ENCODE measurements at regions of chr20 and their contacts with region 1.

Region 1: GRCh38 chr20:49909499-49910339 is 5.6 kb downstream of the SPATA2 start:
- DNase-seq: peak in 1 of 2 donors; percentile 58
- H3K4me3 ChIP-seq: no peak overlapping the region
- H3K27ac ChIP-seq: peak overlapping the region; percentile 33 to 34
- H3K4me1 ChIP-seq: peaks cover 3 to 12% of the 10 kb centered on the region in 2 donors
- H3K27me3 ChIP-seq: no peaks in the 10 kb centered on the region
- CTCF ChIP-seq: peak in 2 of 3 donors; percentile 6 to 39
- POLR2A ChIP-seq: no peak

Region 2: DNA sequence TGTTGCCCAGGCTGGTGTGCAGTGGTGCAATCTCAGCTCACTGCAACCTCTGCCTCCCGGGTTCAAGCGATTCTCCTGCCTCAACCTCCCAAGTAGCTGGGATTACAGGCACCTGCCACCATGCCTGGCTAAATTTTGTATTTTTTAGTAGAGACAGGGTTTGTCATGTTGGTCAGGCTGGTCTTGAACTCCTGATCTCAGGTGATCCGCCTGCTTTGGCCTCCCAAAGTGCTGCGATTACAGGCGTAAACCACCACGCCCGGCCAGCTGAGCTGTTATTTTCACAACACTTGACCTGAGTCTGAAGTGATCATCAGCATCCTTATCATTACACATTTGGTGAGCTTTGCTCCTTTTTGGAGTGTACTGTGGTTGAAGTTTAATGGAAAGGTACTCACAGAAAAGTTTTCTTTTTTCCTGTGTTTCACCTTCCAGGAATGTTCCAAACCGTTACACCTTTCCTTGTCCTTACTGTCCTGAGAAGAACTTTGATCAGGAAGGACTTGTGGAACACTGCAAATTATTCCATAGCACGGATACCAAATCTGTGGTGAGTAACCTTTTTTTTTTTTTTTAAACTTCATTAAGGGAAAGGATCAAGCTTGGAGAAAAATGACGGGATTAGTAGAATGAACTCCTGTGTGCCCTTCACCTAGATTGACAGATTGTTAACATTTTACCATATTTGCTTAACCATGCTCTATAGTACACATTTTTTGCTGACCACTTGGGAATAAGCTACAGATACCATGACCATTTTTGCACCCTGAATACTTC is 36.2 kb after region 1 on chr20:
- intact Hi-C with region 1: loop called (anchors 2 kb)
- DNase-seq: no peak
- H3K4me3 ChIP-seq: no peak overlapping the region
- H3K27ac ChIP-seq: no peak overlapping the region
- H3K4me1 ChIP-seq: no peaks in the 10 kb centered on the region
- H3K27me3 ChIP-seq: no peaks in the 10 kb centered on the region
- CTCF ChIP-seq: no peak
- POLR2A ChIP-seq: no peak

Region 3: DNA sequence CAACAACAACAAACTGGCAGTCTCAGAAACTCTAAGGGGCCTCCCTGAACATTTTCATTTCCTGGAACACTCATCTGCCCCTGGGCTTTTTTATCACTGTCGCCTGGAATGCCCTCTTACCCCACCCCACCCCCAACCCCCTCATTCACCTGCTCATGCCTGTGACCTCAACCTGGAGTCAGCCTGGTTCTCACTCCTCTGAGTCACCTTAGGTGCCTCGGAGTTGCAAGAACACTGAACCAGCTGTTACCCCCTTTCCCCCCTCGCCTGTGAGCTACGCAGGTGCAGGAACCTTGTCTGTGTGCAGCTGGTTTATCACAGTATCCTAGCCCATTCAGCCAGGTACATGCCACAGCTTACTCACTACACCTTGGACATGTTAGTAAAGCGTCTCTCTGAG is 60.2 kb after region 1 on chr20:
- intact Hi-C with region 1: no loop called
- DNase-seq: no peak
- H3K4me3 ChIP-seq: no peak overlapping the region
- H3K27ac ChIP-seq: no peak overlapping the region
- H3K4me1 ChIP-seq: no peaks in the 10 kb centered on the region
- H3K27me3 ChIP-seq: no peaks in the 10 kb centered on the region
- CTCF ChIP-seq: no peak
- POLR2A ChIP-seq: no peak

Measured in breast epithelium (tissue), 4 donors.